Right ventricle myocardium superior (tissue), 1 donor: ENCODE measurements at regions of chr6 and their contacts with region 1.

Region 1: DNA sequence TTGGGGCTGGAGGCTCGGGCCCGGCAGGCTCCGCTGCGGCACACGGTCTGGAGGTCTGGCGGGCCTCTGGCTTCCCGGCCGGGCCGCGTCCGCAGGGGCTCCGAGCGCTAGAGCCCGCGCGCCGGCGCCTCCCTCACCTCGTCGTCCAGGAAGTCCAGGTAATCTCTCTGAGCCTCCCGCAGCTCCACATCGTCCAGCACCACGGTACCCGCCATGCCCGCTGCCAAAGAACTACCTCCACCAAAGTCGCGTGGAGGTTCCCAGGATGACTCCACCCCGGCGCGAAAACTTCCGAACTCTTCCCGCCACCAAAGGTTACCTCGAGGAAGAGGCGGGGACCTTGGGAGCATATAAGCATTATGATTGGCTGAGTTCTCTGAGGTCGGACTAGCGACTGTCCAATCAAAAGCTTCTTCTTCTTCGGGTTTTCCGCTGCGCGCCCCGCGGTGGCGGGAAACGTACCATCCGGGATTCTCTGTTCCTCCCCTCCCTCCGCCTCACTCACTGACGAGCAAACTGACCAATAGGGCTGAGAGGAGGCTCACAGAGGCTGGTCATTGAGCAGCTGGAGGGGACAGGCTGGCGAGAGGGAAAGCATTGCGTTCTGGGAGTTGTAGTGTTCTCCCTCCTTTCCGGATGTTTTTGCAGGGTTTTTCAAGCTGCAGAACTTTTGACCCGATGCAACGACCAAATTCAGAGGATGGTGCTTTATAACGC is at the start of gene MCM3:
- DNase-seq: peak; percentile 98
- ATAC-seq: peak; percentile 100
- total RNA-seq, gene MCM3: 19.3 TPM

Region 2: GRCh38 chr6:52361945-52362442 is 77.4 kb after region 1 on chr6 and contains the start of gene PAQR8:
- intact Hi-C with region 1: loop called (anchors 5 kb)
- DNase-seq: peak; percentile 88
- ATAC-seq: peak; percentile 99
- total RNA-seq, gene PAQR8: 2.6 TPM

Region 3: DNA sequence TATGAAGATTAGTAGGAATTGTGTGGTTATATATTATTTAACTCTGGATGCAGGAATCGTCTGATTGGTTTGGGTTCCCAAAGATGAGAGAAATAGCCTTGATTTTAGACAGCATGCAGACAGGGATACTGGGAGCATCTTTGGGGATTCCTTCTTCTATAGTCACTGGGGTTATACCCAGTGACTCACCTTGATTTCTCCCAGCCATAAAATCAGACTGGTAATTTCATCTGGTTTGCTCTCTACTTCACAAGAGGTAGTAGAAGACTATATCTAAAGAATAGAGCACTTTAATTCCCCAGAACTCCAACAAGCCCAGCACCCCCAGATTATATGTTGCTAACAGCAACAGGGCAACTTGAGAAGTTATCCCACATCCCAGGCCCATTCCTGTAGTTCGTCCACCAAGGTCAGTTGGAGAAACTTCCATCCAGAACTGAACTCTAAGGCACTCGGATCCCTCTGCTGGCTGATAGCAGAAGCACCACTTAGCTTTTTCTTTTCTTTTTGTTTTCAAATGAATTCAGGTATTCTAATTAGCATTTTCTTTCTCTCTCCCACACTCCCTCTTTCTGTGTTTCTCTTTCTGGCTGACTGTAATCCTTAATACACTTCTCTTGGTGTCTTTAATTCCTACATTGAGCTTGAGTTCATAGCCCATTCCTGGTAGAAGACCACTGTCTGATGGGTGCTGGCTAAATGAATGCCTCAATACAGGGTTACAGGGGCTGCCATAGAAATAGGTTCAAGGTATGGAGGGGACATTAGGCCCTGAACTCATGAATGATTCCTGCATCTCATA is 115.1 kb after region 1 on chr6:
- intact Hi-C with region 1: loop called (anchors 5 kb)
- DNase-seq: no peak
- ATAC-seq: peak; percentile 64